ENCODE measurements at regions of chr11 and their contacts with region 1.

Region 1: DNA sequence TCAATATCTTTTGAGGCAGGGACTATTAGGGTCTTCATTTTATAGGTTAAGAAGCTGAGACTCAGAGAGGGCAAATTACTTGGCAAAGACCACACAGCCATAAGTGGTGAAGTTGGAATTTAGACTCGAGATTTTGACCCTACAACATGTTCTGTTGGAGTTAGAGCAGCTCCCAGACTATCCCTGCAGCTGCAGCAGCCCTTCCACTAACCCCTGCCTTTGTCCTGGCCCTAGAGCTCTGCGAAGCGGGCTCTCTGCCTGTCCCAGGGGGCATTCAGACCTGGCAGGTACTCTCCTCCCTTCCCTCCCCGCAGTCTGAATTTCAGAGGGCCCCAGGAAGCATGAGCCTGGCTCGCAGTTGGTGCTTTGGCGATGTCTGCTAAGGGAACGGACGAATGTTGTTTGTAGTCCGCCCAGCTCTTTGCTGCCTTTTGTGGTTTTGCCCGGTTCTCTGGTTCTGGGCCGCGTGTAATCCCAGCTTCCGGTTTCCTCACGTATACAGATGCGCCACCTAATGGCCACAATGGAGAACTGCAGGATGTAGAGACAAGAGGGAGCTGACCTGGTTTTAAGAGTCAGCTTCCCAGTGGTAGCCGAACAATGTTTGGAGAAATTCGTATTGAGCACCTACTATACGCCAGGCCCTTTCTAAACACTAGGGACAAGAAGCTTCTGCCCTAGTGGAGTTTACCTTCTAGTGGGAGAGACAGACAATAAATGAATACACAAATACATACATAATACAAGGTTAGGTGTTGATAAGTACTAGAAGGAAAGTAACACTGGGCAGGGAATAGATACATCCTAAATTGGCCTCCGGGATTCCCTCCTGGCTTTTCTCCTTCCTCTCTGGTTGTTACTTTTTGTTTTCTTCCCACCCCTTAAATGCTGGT is 125.2 kb downstream of the ST3GAL4 start:
- DNase-seq: peak; percentile 75
- H3K4me3 ChIP-seq: peak overlapping the region; percentile 38
- H3K27ac ChIP-seq: peak overlapping the region; percentile 67
- H3K4me1 ChIP-seq: peaks cover 5% of the 10 kb centered on the region
- H3K27me3 ChIP-seq: no peaks in the 10 kb centered on the region
- CTCF ChIP-seq: peak; percentile 95

Region 2: DNA sequence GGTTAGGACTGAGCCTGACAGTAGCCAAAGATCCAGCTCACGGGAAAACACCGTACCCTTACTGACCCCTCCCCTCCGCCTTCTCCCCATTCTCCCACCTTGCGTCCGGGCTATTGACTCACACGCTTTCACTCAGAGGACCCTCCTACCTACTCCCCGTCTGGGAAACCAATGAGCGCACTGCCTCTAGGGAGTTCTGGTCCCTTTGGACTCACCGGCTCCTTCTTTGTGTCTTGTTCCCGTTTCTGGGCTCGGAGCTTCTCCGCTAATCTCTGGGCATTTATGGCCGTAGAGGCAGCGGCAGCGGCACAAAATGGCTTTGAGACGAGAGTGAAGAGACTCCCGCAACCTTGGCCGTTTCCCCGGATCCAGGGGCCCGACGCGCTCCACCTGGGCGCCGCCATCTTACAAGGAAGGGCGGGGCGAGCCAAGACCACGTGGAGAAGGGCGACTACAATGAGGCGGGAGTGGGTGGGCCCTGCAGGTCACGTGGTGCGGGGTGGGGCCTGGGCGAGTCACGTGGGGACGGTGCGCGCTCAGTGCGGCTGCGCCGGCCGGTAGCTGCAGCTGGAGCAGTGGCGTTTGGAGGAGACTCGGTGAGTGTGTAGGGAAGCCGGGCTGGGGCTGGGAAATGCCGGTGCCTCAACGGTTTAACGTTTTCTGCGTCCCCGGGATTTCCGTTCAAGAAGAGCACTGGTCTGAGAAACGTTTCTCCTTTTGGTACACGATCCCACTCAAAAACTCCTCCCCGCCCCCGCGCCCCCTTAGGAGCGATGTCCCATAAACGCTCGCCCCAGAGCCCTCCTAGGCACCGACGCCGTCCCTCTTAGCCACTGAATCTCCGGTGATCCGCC is 269.2 kb before region 1 on chr11 and contains the starts of genes FAM118B and RPUSD4:
- intact Hi-C with region 1: no loop called
- DNase-seq: peak; percentile 99
- H3K4me3 ChIP-seq: peak within 1 kb of the TSS; percentile 92
- H3K27ac ChIP-seq: peak within 1 kb of the TSS; percentile 83
- H3K4me1 ChIP-seq: peaks cover 68% of the 10 kb centered on the region
- H3K27me3 ChIP-seq: no peaks in the 10 kb centered on the region
- CTCF ChIP-seq: no peak
- total RNA-seq, gene FAM118B: 26.7 TPM
- total RNA-seq, gene RPUSD4: 37.6 TPM

Region 3: GRCh38 chr11:126310228-126310991 is 170.2 kb before region 1 on chr11:
- intact Hi-C with region 1: loop called (anchors 2 kb)
- DNase-seq: peak; percentile 80
- H3K4me3 ChIP-seq: no peak overlapping the region
- H3K27ac ChIP-seq: no peak overlapping the region
- H3K4me1 ChIP-seq: peaks cover 8% of the 10 kb centered on the region
- H3K27me3 ChIP-seq: no peaks in the 10 kb centered on the region
- CTCF ChIP-seq: peak; percentile 92

Region 4: GRCh38 chr11:126440792-126441514 is 39.7 kb before region 1 on chr11:
- intact Hi-C with region 1: loop called (anchors 5 kb)
- DNase-seq: peak; percentile 74
- H3K4me3 ChIP-seq: peak overlapping the region; percentile 4
- H3K27ac ChIP-seq: no peak overlapping the region
- H3K4me1 ChIP-seq: peaks cover 33% of the 10 kb centered on the region
- H3K27me3 ChIP-seq: peaks cover 15% of the 10 kb centered on the region
- CTCF ChIP-seq: peak; percentile 98